ENCODE measurements at regions of chr17 and their contacts with region 1.

Region 1: GRCh38 chr17:38349097-38349730 is 2.4 kb upstream of the SOCS7 start:
- DNase-seq: peak; percentile 80
- CTCF ChIP-seq: peak; percentile 95

Region 2: DNA sequence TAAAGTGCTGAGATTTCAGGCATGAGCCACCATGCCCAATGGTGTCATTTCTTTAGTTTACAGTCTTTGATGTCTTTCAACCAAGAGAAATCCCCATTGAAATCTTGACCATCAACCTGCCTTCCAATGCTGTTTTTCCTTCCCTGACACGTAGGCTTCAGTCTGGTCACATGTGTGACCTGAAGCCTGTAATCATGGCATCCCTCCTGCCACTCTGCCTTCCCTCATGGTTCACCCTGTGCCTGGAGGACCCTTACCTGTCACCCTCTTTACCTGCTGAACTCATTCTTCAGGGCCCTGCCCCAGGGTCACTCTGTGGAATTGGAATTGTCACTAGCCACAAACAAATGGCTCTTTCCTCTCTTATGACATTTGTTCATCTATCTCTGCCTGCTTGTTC is 61.0 kb after region 1 on chr17:
- in situ Hi-C with region 1: loop called (anchors 5 kb)
- DNase-seq: no peak
- CTCF ChIP-seq: no peak

Region 3: DNA sequence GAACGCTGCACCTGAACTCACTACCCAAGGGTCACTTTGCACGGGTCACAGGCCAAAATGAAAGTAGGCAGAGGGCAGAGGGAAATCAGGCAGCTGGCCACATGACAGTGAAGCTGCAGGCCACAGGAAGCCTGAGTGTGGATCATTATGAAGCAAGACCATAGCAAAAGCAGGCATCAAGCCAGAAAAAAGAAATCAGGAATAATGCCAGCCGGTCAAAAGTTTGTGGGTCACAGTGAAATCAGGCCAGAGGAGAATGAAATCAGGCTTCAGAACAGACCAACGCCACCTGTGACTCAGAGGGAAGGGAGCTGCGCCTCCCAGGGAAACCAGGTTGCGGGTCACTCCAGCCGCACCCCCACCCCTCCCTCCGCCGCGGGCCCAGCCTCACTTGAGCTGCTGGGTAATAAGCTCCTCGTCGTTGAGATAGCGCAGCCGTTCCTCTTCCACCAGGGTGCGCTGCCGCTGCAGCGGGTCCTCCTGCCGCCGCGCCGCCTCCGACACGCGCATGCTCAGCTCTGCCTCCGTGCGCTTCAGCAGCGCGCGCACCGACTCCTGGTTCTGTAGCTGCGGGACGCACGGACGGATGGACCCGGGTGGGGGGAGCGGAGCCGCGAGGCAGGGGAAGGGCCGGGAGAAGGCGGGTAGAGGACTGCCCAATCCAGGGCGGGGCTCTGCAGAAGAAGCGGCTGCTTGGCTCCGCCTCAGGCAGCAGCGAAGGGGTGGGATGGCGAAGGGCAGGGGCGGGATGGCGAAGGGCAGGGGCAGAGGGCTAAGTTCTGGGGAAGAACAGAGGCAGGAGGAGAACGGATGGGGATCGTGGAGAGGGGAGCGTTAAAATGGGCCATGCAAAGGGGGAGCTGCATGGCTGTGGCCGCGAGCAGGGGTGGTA is 208.9 kb after region 1 on chr17:
- in situ Hi-C with region 1: no loop called
- DNase-seq: peak; percentile 95
- CTCF ChIP-seq: peak; percentile 99